ENCODE measurements at regions of chr6 and their contacts with region 1.

Region 1: DNA sequence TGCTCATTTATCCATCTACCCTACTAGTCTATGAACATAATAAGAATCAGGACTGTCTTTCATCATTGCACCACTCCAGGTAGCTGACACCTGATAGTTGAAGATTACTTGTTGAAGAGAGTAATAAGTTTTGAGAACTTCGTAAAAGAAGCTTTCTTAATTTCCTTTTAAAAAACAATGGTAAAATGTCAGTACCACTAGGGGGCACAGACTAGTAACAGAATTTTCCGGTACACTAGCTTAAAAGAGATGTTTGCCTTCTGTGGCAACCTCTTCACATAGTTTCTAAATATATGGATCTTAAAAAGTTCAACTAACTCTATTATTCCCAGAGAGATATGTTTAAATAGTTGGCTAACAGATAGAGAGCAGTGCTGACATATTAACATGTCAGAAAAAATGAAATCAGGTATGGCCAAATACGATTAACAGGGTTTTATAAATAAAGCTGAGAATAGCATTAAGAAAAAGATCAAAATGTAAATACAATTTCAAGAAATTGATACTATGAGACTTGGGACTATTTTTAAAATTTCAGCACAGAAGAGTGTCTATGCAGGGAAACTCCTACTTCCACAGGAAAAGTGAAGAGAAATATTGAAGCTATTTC is 5.4 kb upstream of the KCNQ5 start:
- DNase-seq: no peak
- ATAC-seq: no peak
- H3K4me3 ChIP-seq: no peak overlapping the region
- H3K27ac ChIP-seq: no peak overlapping the region
- H3K4me1 ChIP-seq: peaks cover 13% of the 10 kb centered on the region
- H3K27me3 ChIP-seq: no peaks in the 10 kb centered on the region
- CTCF ChIP-seq: peak; percentile 57 to 70 (median 60); a peak in 5 of 6 replicates
- EP300 ChIP-seq: no peak
- POLR2A ChIP-seq: no peak
- RAD21 ChIP-seq: peak; percentile 81

Region 2: GRCh38 chr6:72522719-72523141 is 93.8 kb before region 1 on chr6:
- CTCF ChIA-PET with region 1: interaction called, 11 read pairs
- POLR2A ChIA-PET with region 1: no interaction called
- RAD21 ChIA-PET with region 1: no interaction called
- SMC1A ChIA-PET with region 1: interaction called, 7 read pairs
- in situ Hi-C with region 1: no loop called
- intact Hi-C with region 1: no loop called
- DNase-seq: no peak
- ATAC-seq: peak; percentile 86
- H3K4me3 ChIP-seq: no peak overlapping the region
- H3K27ac ChIP-seq: no peak overlapping the region
- H3K4me1 ChIP-seq: no peaks in the 10 kb centered on the region
- H3K27me3 ChIP-seq: no peaks in the 10 kb centered on the region; a peak in 1 of 4 replicates
- CTCF ChIP-seq: peak; percentile 32 to 55 (median 50)
- EP300 ChIP-seq: no peak
- POLR2A ChIP-seq: no peak
- RAD21 ChIP-seq: 0 out of 2 replicates have a peak, but pooled peaks have one; percentile 18

Region 3: GRCh38 chr6:72683797-72684196 is 67.3 kb after region 1 on chr6:
- CTCF ChIA-PET with region 1: interaction called, 39 read pairs
- POLR2A ChIA-PET with region 1: interaction called, 41 read pairs
- RAD21 ChIA-PET with region 1: interaction called, 149 read pairs
- SMC1A ChIA-PET with region 1: interaction called, 245 read pairs
- in situ Hi-C with region 1: no loop called
- intact Hi-C with region 1: no loop called
- DNase-seq: peak; percentile 65
- ATAC-seq: peak; percentile 88
- H3K4me3 ChIP-seq: peak overlapping the region; percentile 48; the same call in 1 of the 2 replicates
- H3K27ac ChIP-seq: peak overlapping the region; percentile 89
- H3K4me1 ChIP-seq: peaks cover 19% of the 10 kb centered on the region
- H3K27me3 ChIP-seq: no peaks in the 10 kb centered on the region
- CTCF ChIP-seq: no peak
- EP300 ChIP-seq: peak; percentile 91 to 94
- POLR2A ChIP-seq: no peak
- RAD21 ChIP-seq: no peak

Region 4: GRCh38 chr6:72861935-72862432 is 245.5 kb after region 1 on chr6:
- CTCF ChIA-PET with region 1: no interaction called
- POLR2A ChIA-PET with region 1: no interaction called
- RAD21 ChIA-PET with region 1: interaction called, 11 read pairs
- SMC1A ChIA-PET with region 1: interaction called, 8 read pairs
- in situ Hi-C with region 1: no loop called
- intact Hi-C with region 1: no loop called
- DNase-seq: peak; percentile 13
- ATAC-seq: peak; percentile 79
- H3K4me3 ChIP-seq: no peak overlapping the region
- H3K27ac ChIP-seq: no peak overlapping the region
- H3K4me1 ChIP-seq: no peaks in the 10 kb centered on the region
- H3K27me3 ChIP-seq: no peaks in the 10 kb centered on the region
- CTCF ChIP-seq: no peak
- EP300 ChIP-seq: no peak
- POLR2A ChIP-seq: no peak
- RAD21 ChIP-seq: no peak

Region 5: GRCh38 chr6:73116330-73116729 is 499.8 kb after region 1 on chr6:
- CTCF ChIA-PET with region 1: interaction called, 33 read pairs
- POLR2A ChIA-PET with region 1: no interaction called
- RAD21 ChIA-PET with region 1: interaction called, 20 read pairs
- SMC1A ChIA-PET with region 1: interaction called, 19 read pairs
- in situ Hi-C with region 1: no loop called
- intact Hi-C with region 1: no loop called
- DNase-seq: no peak
- ATAC-seq: no peak
- H3K4me3 ChIP-seq: no peak overlapping the region
- H3K27ac ChIP-seq: no peak overlapping the region
- H3K4me1 ChIP-seq: no peaks in the 10 kb centered on the region
- H3K27me3 ChIP-seq: no peaks in the 10 kb centered on the region
- CTCF ChIP-seq: no peak
- EP300 ChIP-seq: no peak
- POLR2A ChIP-seq: no peak
- RAD21 ChIP-seq: no peak

Region 6: GRCh38 chr6:73169111-73169510 is 552.6 kb after region 1 on chr6:
- CTCF ChIA-PET with region 1: interaction called, 15 read pairs
- POLR2A ChIA-PET with region 1: no interaction called
- RAD21 ChIA-PET with region 1: interaction called, 12 read pairs
- SMC1A ChIA-PET with region 1: interaction called, 5 read pairs
- in situ Hi-C with region 1: no loop called
- intact Hi-C with region 1: no loop called
- DNase-seq: no peak
- ATAC-seq: no peak
- H3K4me3 ChIP-seq: no peak overlapping the region
- H3K27ac ChIP-seq: no peak overlapping the region
- H3K4me1 ChIP-seq: no peaks in the 10 kb centered on the region
- H3K27me3 ChIP-seq: no peaks in the 10 kb centered on the region
- CTCF ChIP-seq: no peak
- EP300 ChIP-seq: no peak
- POLR2A ChIP-seq: no peak
- RAD21 ChIP-seq: no peak

Region 7: DNA sequence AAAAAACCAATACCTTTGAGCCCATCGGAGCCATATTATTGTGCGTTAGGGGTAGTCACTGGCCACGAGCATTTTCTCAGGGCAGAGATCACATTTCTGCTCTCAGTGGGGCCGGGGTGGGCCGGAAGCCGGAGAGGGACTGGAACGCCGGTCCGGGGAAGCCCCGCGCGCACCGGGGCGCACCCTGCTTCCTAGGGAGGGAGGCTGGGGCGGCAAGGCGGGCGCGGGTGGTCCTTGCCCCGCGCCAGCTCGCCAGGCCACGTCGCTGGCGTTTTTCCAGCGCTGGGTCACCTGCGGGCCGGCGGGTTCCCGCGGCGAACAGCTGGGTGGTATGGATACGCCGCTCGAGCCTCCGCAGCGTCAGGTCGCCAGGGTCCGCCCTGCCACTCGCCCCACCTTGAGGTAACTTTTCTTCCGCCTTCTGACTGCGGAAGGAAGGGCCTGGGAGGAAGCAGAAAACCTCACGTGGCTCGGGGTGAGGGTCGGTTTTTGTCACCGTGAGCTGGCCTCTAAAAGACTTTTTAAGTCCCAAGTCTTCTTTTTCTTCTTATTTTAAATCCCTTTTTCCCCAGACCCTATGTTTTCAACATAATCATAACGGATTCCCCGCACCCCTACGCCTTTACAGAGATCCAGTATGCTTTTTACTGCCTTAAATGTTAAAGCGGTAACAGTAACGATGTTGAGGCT is 907.1 kb after region 1 on chr6:
- CTCF ChIA-PET with region 1: no interaction called
- POLR2A ChIA-PET with region 1: no interaction called
- RAD21 ChIA-PET with region 1: no interaction called
- SMC1A ChIA-PET with region 1: no interaction called
- in situ Hi-C with region 1: no loop called
- intact Hi-C with region 1: no loop called
- DNase-seq: no peak
- ATAC-seq: peak; percentile 56
- H3K4me3 ChIP-seq: peak overlapping the region; percentile 83
- H3K27ac ChIP-seq: peak overlapping the region; percentile 100
- H3K4me1 ChIP-seq: peaks cover 6% of the 10 kb centered on the region; the same call in 1 of the 2 replicates
- H3K27me3 ChIP-seq: no peaks in the 10 kb centered on the region
- CTCF ChIP-seq: no peak
- EP300 ChIP-seq: no peak
- POLR2A ChIP-seq: peak; percentile 96
- RAD21 ChIP-seq: no peak